ENCODE measurements at regions of chr1 and their contacts with region 1.

Region 1: GRCh38 chr1:61210435-61211154 is 128.2 kb downstream of the NFIA start:
- DNase-seq: no peak
- ATAC-seq: no peak
- H3K4me3 Mint-ChIP-seq: no peak overlapping the region
- H3K27ac Mint-ChIP-seq: no peak overlapping the region
- H3K4me1 Mint-ChIP-seq: no peaks in the 10 kb centered on the region
- H3K27me3 Mint-ChIP-seq: peaks cover 3% of the 10 kb centered on the region
- CTCF ChIP-seq: no peak

Region 2: GRCh38 chr1:61049850-61050540 is 160.6 kb before region 1 on chr1:
- CTCF ChIA-PET with region 1: interaction called, 7 read pairs
- POLR2A ChIA-PET with region 1: no interaction called
- intact Hi-C with region 1: loop called (anchors 2 kb)
- DNase-seq: peak; percentile 82
- ATAC-seq: peak; percentile 87
- H3K4me3 Mint-ChIP-seq: peak overlapping the region; percentile 82
- H3K27ac Mint-ChIP-seq: no peak overlapping the region
- H3K4me1 Mint-ChIP-seq: peaks cover 29% of the 10 kb centered on the region
- H3K27me3 Mint-ChIP-seq: peaks cover 54% of the 10 kb centered on the region
- CTCF ChIP-seq: peak; percentile 36